ENCODE measurements at regions of chr6 and their contacts with region 1.

Region 1: GRCh38 chr6:151147118-151147832 is 92.5 kb upstream of the AKAP12 start:
- DNase-seq: no peak
- H3K4me3 Mint-ChIP-seq: no peak overlapping the region
- H3K27ac Mint-ChIP-seq: no peak overlapping the region
- H3K4me1 Mint-ChIP-seq: no peaks in the 10 kb centered on the region
- H3K27me3 Mint-ChIP-seq: peaks cover 16% of the 10 kb centered on the region

Region 2: DNA sequence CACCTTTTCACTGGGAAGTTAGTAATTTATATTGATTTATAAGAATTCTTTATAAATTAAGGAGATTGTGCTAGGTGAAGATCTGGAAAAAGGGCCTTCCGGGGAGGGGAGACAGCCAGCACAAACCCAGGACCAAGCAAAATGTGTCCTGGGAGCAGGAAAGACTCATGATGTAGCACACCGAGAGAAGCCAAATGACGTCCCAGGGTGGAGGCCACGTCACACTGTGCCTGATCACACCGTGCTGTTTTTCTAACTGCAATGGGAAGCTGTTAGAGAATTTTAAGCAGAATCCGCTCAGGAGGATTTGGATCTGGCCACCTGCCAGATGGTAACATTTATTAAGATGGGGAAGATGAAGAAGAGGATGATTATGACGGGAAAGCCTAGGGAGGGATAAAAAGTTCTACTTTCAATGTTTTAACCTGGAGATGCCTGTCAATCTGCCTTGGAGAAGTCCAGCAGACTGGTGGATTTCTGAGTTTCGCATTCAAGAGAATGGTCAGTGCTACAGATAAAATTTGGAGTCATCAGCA is 19.8 kb after region 1 on chr6:
- intact Hi-C with region 1: loop called (anchors 1 kb)
- DNase-seq: no peak
- H3K4me3 Mint-ChIP-seq: no peak overlapping the region
- H3K27ac Mint-ChIP-seq: no peak overlapping the region
- H3K4me1 Mint-ChIP-seq: no peaks in the 10 kb centered on the region
- H3K27me3 Mint-ChIP-seq: peaks cover 10% of the 10 kb centered on the region

Region 3: GRCh38 chr6:151179321-151179720 is 32.0 kb after region 1 on chr6:
- intact Hi-C with region 1: no loop called
- DNase-seq: no peak
- H3K4me3 Mint-ChIP-seq: no peak overlapping the region
- H3K27ac Mint-ChIP-seq: no peak overlapping the region
- H3K4me1 Mint-ChIP-seq: no peaks in the 10 kb centered on the region
- H3K27me3 Mint-ChIP-seq: peaks cover 23% of the 10 kb centered on the region

Measured in activated T-helper 2 cell treated with anti-CD3 and anti-CD28 coated beads, Interferon-gamma antibody, Interleukin-2, Interleukin-4, amounts not matched to agents 10 μg/mL and 5 μg/mL and 100 μg/mL, durations not matched to agents 14 hours and 24 hours and 36 hours (primary cell).